GM12878 (cell line): ENCODE measurements at regions of chr17 and their contacts with region 1.

Region 1: DNA sequence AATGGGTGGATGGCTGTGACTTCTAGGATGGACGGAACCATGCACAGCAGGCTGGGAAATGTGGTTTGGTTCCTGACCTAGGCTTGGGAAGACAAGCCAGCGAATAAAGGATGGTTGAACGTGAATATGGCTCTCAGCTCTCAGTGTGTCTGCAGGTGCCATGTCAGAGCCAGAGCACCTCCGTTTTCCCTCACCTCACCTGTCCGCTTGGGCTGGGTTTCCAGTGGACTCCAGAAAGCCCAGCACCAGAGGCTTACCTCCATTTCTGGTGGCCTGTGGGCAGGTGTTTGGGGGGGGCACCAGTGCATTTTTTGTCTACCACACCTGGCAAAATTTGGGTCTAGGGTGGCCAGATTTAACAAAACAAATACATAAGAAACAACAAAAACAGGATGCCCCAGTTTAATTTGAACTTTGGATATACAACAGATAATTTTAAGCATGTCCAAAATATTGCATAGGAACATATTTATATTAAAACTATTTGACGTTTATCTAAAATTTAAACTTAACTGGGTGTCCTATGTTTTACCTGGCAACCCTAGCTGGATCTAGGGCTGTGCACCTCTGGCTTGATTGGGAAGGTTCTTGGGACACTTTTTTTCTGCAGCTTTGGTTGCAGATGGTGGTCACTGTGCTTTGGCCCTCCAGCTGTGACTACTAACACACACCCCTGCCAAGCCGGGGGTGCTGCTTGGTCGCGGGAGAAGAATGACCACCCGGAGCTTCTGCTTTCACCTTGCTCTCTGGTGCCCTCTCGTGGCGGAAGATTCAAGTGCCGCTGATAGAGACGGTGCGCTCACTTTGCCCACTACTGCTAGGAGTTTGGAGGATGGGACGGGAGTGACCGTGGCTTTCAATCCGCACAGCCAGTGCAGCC is 6.3 kb downstream of the SPACA3 start:
- DNase-seq: no peak
- ATAC-seq: peak; percentile 92
- H3K4me3 ChIP-seq: no peak overlapping the region
- H3K27ac ChIP-seq: no peak overlapping the region
- H3K4me1 ChIP-seq: peaks cover 13% of the 10 kb centered on the region
- H3K27me3 ChIP-seq: no peaks in the 10 kb centered on the region; a peak in 1 of 4 replicates
- CTCF ChIP-seq: peak; percentile 78 to 91 (median 84)
- EP300 ChIP-seq: no peak
- POLR2A ChIP-seq: no peak
- RAD21 ChIP-seq: peak; percentile 66

Region 2: DNA sequence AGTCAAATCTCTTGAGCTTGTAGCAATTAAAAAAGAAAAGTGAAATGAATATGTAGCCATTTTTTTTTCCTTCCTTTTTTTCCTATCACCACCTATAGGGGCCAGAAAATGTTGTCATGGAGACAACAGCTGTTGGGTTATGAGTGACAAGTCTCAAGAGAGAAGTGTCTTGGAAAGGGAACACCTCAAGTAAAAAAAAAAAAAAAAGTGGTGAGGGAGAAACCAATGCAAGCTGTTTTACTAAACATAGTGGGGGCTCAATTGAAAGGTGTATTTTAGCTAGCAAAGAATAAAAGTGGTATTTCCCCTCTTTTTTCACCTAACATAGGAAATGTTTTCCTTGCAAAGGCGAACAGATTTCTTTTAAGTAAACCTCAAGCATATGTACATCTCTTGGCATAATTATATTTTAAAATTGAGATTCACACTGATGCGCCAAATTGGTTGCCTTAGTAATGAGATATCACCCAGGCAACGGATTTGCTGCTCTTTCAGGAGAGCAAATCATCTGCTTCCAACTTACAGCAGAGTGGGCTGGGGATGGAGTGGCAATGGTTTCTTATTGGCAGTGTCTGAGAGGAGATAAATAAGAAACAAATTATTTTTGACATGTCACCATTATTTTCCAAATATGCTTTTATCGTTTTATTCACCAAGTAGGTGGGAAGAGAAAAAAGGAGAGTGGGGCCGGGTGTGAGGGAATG is 304.6 kb before region 1 on chr17:
- CTCF ChIA-PET with region 1: no interaction called
- POLR2A ChIA-PET with region 1: no interaction called
- RAD21 ChIA-PET with region 1: no interaction called
- SMC1A ChIA-PET with region 1: no interaction called
- in situ Hi-C with region 1: no loop called
- intact Hi-C with region 1: no loop called
- DNase-seq: no peak
- ATAC-seq: no peak
- H3K4me3 ChIP-seq: no peak overlapping the region
- H3K27ac ChIP-seq: no peak overlapping the region
- H3K4me1 ChIP-seq: no peaks in the 10 kb centered on the region
- H3K27me3 ChIP-seq: no peaks in the 10 kb centered on the region
- CTCF ChIP-seq: no peak
- EP300 ChIP-seq: no peak
- POLR2A ChIP-seq: no peak
- RAD21 ChIP-seq: no peak

Region 3: GRCh38 chr17:32971171-32971570 is 26.8 kb before region 1 on chr17:
- CTCF ChIA-PET with region 1: interaction called, 11 read pairs
- POLR2A ChIA-PET with region 1: no interaction called
- RAD21 ChIA-PET with region 1: no interaction called
- SMC1A ChIA-PET with region 1: interaction called, 4 read pairs
- in situ Hi-C with region 1: no loop called
- intact Hi-C with region 1: no loop called
- DNase-seq: peak; percentile 56
- ATAC-seq: peak; percentile 83
- H3K4me3 ChIP-seq: no peak overlapping the region
- H3K27ac ChIP-seq: no peak overlapping the region
- H3K4me1 ChIP-seq: peaks cover 10% of the 10 kb centered on the region; the same call in 1 of the 2 replicates
- H3K27me3 ChIP-seq: no peaks in the 10 kb centered on the region
- CTCF ChIP-seq: no peak
- EP300 ChIP-seq: no peak
- POLR2A ChIP-seq: no peak
- RAD21 ChIP-seq: no peak

Region 4: DNA sequence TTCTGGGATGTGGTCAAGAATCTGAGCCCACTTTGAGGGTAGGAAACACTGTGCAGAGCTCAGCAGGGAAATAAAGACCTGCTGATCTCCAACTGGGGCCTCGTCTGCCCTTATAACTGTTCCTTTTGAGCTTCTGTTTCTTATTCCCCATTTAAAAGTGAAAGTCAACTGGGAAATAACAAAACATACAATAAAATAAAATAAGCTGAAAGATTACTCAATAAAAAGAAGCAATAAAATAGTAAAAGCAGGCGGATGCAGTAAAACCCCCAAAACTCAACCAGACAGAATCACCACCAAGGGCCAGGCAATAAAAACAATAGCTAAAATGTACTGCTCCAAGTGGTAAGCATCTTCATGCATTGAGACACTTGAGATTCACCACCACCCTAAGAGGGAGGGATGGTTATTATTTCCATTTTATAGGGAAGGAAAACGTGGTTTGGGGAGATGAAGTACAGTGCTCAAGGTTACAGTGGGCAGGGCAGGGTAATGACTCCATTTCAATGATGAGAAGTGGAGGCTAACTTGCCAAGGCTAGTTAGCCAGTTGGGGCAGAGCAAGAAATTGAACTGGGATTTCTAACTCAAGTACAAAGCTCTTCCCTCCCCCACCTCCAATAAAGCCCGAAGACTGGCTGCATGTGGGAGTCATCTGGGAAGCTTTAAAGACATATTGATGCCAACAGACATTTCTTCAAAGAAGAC is 12.8 kb before region 1 on chr17:
- CTCF ChIA-PET with region 1: interaction called, 12 read pairs
- POLR2A ChIA-PET with region 1: no interaction called
- RAD21 ChIA-PET with region 1: interaction called, 6 read pairs
- SMC1A ChIA-PET with region 1: interaction called, 8 read pairs
- in situ Hi-C with region 1: no loop called
- intact Hi-C with region 1: no loop called
- DNase-seq: no peak
- ATAC-seq: no peak
- H3K4me3 ChIP-seq: no peak overlapping the region
- H3K27ac ChIP-seq: no peak overlapping the region
- H3K4me1 ChIP-seq: no peaks in the 10 kb centered on the region
- H3K27me3 ChIP-seq: no peaks in the 10 kb centered on the region
- CTCF ChIP-seq: no peak
- EP300 ChIP-seq: no peak
- POLR2A ChIP-seq: no peak
- RAD21 ChIP-seq: no peak

Region 5: DNA sequence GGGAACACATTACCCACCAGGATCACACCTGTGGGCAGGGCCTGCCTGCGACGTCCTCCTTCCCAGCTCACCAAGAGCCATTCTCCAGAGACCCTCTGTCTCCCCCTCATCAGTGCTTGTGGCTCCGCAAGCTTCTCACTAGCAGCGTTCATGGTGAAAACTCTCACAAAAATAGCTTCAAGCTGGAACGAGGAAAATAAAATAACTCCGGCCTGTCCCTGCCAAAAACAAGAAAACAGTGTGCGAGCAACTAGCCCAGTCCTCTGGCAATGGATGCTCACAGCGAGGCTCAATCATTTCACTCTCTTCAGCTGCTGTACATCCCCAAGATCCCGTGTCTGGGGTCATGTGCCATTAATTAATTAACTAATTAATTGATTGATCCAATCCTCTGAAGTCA is 11.6 kb after region 1 on chr17:
- CTCF ChIA-PET with region 1: interaction called, 16 read pairs
- POLR2A ChIA-PET with region 1: no interaction called
- RAD21 ChIA-PET with region 1: no interaction called
- SMC1A ChIA-PET with region 1: no interaction called
- in situ Hi-C with region 1: no loop called
- intact Hi-C with region 1: no loop called
- DNase-seq: no peak
- ATAC-seq: no peak
- H3K4me3 ChIP-seq: no peak overlapping the region
- H3K27ac ChIP-seq: no peak overlapping the region
- H3K4me1 ChIP-seq: no peaks in the 10 kb centered on the region
- H3K27me3 ChIP-seq: peaks cover 3% of the 10 kb centered on the region in 2 experiments; a peak in 2 of 4 replicates
- CTCF ChIP-seq: no peak
- EP300 ChIP-seq: no peak
- POLR2A ChIP-seq: no peak
- RAD21 ChIP-seq: no peak